ENCODE measurements at regions of chr5 and their contacts with region 1.

Region 1: GRCh38 chr5:54844905-54845566 is 140.4 kb downstream of the ESM1 start:
- DNase-seq: peak; percentile 47
- H3K4me3 Mint-ChIP-seq: no peak overlapping the region
- H3K27ac Mint-ChIP-seq: no peak overlapping the region
- H3K4me1 Mint-ChIP-seq: no peaks in the 10 kb centered on the region
- H3K27me3 Mint-ChIP-seq: no peaks in the 10 kb centered on the region
- CTCF ChIP-seq: peak; percentile 47

Region 2: DNA sequence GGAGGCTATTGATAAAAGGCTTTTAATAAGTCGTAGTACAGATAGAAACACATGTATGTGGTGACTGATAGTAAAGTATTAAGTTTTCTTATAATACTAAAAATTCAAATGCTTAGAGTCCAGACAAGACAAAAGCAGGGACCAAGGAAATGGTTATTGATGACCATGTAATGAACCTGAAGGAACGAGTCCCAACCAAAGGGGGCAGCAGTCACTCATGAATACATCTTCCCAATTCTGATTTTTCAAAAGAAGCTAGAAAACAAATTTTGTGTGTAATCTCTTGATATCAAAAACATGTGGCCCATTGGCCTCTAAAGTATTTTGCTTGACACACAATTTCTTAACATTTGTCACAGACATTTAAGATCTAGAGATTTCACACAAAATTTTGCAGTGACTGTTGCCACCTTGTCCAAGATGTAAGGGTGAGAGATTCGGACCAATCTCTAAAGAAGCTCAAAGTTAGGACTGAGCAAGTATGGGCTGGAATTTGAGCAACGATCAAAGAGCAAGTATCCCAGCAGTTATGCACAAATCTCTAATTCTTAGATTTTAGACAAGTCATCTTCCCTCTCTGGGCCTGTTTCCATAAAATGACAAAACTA is 601.5 kb before region 1 on chr5:
- CTCF ChIA-PET with region 1: interaction called, 7 read pairs
- POLR2A ChIA-PET with region 1: no interaction called
- intact Hi-C with region 1: loop called (anchors 5 kb)
- DNase-seq: peak; percentile 57
- H3K4me3 Mint-ChIP-seq: no peak overlapping the region
- H3K27ac Mint-ChIP-seq: no peak overlapping the region
- H3K4me1 Mint-ChIP-seq: no peaks in the 10 kb centered on the region
- H3K27me3 Mint-ChIP-seq: no peaks in the 10 kb centered on the region
- CTCF ChIP-seq: peak; percentile 86

Region 3: GRCh38 chr5:54616031-54616430 is 229.0 kb before region 1 on chr5:
- CTCF ChIA-PET with region 1: no interaction called
- POLR2A ChIA-PET with region 1: no interaction called
- intact Hi-C with region 1: no loop called
- DNase-seq: peak; percentile 84
- H3K4me3 Mint-ChIP-seq: no peak overlapping the region
- H3K27ac Mint-ChIP-seq: no peak overlapping the region
- H3K4me1 Mint-ChIP-seq: peaks cover 9% of the 10 kb centered on the region
- H3K27me3 Mint-ChIP-seq: no peaks in the 10 kb centered on the region
- CTCF ChIP-seq: no peak

Region 4: GRCh38 chr5:54646356-54647101 is 198.5 kb before region 1 on chr5:
- CTCF ChIA-PET with region 1: interaction called, 3 read pairs
- POLR2A ChIA-PET with region 1: interaction called, 3 read pairs
- intact Hi-C with region 1: loop called (anchors 10 kb)
- DNase-seq: peak; percentile 91
- H3K4me3 Mint-ChIP-seq: no peak overlapping the region
- H3K27ac Mint-ChIP-seq: peak overlapping the region; percentile 44
- H3K4me1 Mint-ChIP-seq: peaks cover 52% of the 10 kb centered on the region
- H3K27me3 Mint-ChIP-seq: no peaks in the 10 kb centered on the region
- CTCF ChIP-seq: no peak

Region 5: GRCh38 chr5:54825005-54825404 is 20.0 kb before region 1 on chr5:
- CTCF ChIA-PET with region 1: interaction called, 22 read pairs
- POLR2A ChIA-PET with region 1: no interaction called
- intact Hi-C with region 1: no loop called
- DNase-seq: peak; percentile 58
- H3K4me3 Mint-ChIP-seq: no peak overlapping the region
- H3K27ac Mint-ChIP-seq: peak overlapping the region; percentile 49
- H3K4me1 Mint-ChIP-seq: no peaks in the 10 kb centered on the region
- H3K27me3 Mint-ChIP-seq: no peaks in the 10 kb centered on the region
- CTCF ChIP-seq: no peak

Region 6: DNA sequence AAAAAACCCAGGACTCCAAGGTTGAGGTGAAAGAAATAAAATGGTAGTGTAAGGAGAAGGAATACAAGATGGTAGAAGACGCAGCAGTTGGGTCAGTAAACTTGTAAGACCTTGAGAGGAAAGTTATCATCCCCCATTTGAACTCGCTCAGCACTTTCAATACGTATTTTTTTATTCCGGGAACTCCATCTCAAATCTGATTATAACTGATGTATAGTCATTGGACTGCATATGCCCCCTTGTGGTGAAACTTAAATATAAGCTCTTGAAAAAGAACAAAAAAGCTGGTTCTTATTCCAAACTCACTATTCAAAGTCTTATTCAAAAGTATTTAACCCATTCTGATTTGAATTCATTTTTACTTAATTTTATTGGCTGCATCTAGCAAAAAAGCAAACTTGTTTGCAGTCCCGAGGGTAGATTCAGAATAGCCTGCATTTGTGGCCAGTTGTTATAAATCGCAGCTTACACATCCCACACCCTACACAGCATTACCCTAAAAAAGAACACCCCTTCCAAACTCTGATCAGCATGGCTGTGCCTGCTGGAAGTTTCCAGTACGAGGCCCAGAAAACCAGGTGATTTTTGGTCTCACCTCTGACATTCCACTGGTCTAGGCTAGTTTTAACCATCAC is 22.4 kb after region 1 on chr5:
- CTCF ChIA-PET with region 1: interaction called, 13 read pairs
- POLR2A ChIA-PET with region 1: no interaction called
- intact Hi-C with region 1: loop called (anchors 2 kb)
- DNase-seq: peak; percentile 57
- H3K4me3 Mint-ChIP-seq: peak overlapping the region; percentile 44
- H3K27ac Mint-ChIP-seq: no peak overlapping the region
- H3K4me1 Mint-ChIP-seq: peaks cover 6% of the 10 kb centered on the region
- H3K27me3 Mint-ChIP-seq: peaks cover 13% of the 10 kb centered on the region
- CTCF ChIP-seq: peak; percentile 49

Region 7: DNA sequence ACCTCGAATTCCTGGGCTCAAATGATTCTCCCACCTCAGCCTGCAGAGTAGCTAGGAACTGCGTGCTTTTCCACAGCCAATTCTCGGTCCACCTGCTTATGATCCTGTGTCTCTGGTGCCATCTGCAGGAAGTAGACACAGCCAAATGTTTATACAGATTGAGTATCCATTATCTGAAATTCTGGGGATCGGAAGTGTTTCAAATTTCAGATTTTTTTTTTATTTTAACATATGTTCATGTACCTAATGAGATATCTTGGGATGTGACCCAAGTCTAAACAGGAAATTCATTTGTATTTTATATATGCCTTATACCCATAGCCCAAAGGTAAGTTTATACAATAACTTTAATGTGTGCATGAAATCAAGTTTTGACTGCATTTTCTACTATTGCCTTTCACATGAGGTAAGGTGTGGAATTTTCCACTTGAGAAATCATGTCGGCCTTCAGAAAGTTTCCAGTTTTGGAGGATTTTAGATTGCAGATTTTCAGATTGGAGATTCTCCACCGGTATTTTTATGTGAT is 50.8 kb after region 1 on chr5:
- CTCF ChIA-PET with region 1: interaction called, 34 read pairs
- POLR2A ChIA-PET with region 1: no interaction called
- intact Hi-C with region 1: loop called (anchors 1 kb)
- DNase-seq: peak; percentile 73
- H3K4me3 Mint-ChIP-seq: no peak overlapping the region
- H3K27ac Mint-ChIP-seq: peak overlapping the region; percentile 29
- H3K4me1 Mint-ChIP-seq: peaks cover 5% of the 10 kb centered on the region
- H3K27me3 Mint-ChIP-seq: peaks cover 40% of the 10 kb centered on the region
- CTCF ChIP-seq: peak; percentile 65